ENCODE measurements at regions of chr11 and their contacts with region 1.

Region 1: DNA sequence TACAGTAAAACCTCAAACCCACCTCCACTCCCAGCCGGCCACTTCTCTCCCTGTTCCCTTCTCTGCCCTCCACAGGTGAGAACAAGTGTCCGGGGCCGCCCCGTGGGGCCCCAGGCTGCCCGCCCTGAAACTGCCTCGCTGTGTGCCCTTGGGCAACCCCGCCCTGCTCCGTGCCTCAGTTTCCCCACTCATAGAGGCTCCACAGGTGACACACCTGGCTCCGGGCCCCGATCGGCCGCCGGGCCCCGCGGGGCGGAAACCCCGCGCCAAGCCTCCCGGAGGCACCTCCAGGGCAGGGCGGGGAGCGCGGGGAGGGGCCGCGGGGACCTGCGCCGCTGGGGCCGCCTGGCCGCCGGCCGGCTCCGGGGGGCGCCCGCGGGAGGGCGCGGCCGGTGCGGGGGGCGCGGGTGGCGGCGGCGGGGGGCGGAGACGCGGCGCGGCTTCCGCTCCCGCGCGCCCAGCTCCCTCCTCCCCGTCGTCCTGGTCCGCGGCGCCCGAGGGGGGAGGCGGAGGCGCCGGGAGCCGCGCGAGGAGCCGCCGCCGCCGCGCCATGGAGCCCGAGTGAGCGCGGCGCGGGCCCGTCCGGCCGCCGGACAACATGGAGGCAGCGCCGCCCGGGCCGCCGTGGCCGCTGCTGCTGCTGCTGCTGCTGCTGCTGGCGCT is at the start of gene LRP5:
- DNase-seq: peak; percentile 69
- H3K4me3 ChIP-seq: peak within 1 kb of the TSS; percentile 65 to 82 (median 76)
- H3K27ac ChIP-seq: peak within 1 kb of the TSS; percentile 78 to 92 (median 88)
- H3K4me1 ChIP-seq: peaks cover 0 to 46% (median 41%) of the 10 kb centered on the region in 4 donors
- H3K27me3 ChIP-seq: no peaks in the 10 kb centered on the region
- CTCF ChIP-seq: no peak
- EP300 ChIP-seq: no peak
- POLR2A ChIP-seq: no peak
- total RNA-seq, gene LRP5: 18.3 to 43.8 (median 29.2) TPM

Region 2: DNA sequence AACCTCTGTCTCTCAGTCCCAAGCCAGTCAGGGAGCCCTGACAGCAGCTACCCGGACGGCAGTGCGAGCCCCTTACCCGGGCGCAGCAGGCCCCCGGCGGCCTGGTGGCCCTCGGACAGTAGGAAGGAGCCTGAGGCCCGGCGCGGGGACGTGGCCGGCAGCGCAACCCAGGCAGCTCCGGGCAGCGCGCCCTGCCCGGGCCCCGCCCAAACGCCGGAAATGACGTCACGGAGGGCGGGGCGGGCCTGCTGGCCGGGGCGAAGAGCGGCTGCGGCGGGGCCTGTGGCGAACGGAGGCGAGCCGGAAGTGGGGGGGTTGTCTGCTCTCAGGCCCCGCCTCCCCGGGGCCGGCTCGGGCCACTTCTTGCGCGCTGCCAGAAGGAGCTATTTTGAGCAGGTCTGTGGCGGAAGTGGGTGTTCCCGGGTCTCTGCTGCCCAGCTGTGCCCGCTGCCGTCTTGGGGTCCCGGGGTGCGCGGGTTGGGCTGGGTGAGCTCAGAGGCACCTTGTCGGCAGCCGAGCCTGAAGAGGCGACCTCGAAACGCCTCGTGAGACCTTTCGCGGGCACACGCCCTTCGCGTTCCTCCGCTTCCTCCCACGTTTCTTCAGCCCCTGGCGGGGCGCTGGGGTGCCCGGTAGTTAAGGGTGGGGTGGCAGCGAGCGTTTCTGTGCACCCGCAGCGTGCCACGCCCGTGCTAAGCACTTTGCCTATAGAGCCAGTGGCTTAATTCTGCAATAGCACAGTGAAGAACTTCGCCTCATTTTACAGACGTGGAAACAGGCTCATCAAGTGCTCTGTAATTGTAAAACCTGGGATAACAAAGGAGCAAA is 40.3 kb before region 1 on chr11 and contains the start of gene C11orf24:
- intact Hi-C with region 1: loop called (anchors 5 kb)
- DNase-seq: peak; percentile 98
- H3K4me3 ChIP-seq: peak within 1 kb of the TSS; percentile 63 to 83 (median 72)
- H3K27ac ChIP-seq: peak within 1 kb of the TSS; percentile 93 to 97 (median 94)
- H3K4me1 ChIP-seq: peaks cover 0 to 37% (median 32%) of the 10 kb centered on the region in 4 donors
- H3K27me3 ChIP-seq: no peaks in the 10 kb centered on the region
- CTCF ChIP-seq: peak in 2 of 4 experiments; percentile 13
- EP300 ChIP-seq: no peak
- POLR2A ChIP-seq: peak; percentile 47 to 59
- total RNA-seq, gene C11orf24: 13.7 to 25.4 (median 21.9) TPM

Region 3: GRCh38 chr11:68354148-68354872 is 42.1 kb after region 1 on chr11:
- intact Hi-C with region 1: loop called (anchors 2 kb)
- DNase-seq: peak; percentile 97
- H3K4me3 ChIP-seq: no peak overlapping the region
- H3K27ac ChIP-seq: peak overlapping the region; percentile 85 to 96 (median 93)
- H3K4me1 ChIP-seq: peaks cover 0 to 94% (median 91%) of the 10 kb centered on the region in 4 donors
- H3K27me3 ChIP-seq: no peaks in the 10 kb centered on the region
- CTCF ChIP-seq: no peak
- EP300 ChIP-seq: peak in 2 of 4 donors; percentile 51 to 59
- POLR2A ChIP-seq: peak in 1 of 2 donors; percentile 10

Measured in sigmoid colon (tissue), 7 donors.